Endothelial cell of umbilical vein (primary cell): ENCODE measurements at regions of chr3 and their contacts with region 1.

Region 1: GRCh38 chr3:132535575-132536441 is 61.3 kb upstream of the ACKR4 start:
- DNase-seq: peak; percentile 85
- H3K4me3 ChIP-seq: no peak overlapping the region
- H3K27ac ChIP-seq: no peak overlapping the region
- H3K4me1 ChIP-seq: peaks cover 6% of the 10 kb centered on the region
- H3K27me3 ChIP-seq: no peaks in the 10 kb centered on the region
- CTCF ChIP-seq: peak; percentile 37 to 50
- POLR2A ChIP-seq: no peak

Region 2: GRCh38 chr3:132549890-132550578 is 14.2 kb after region 1 on chr3:
- CTCF ChIA-PET with region 1: interaction called, 26 read pairs
- POLR2A ChIA-PET with region 1: no interaction called
- dilution Hi-C with region 1: no loop called
- intact Hi-C with region 1: no loop called
- DNase-seq: peak; percentile 76
- H3K4me3 ChIP-seq: no peak overlapping the region
- H3K27ac ChIP-seq: peak overlapping the region; percentile 7
- H3K4me1 ChIP-seq: peaks cover 37% of the 10 kb centered on the region
- H3K27me3 ChIP-seq: no peaks in the 10 kb centered on the region
- CTCF ChIP-seq: no peak
- POLR2A ChIP-seq: no peak

Region 3: GRCh38 chr3:132635052-132635451 is 99.2 kb after region 1 on chr3:
- CTCF ChIA-PET with region 1: interaction called, 423 read pairs
- POLR2A ChIA-PET with region 1: no interaction called
- dilution Hi-C with region 1: loop called (anchors 25 kb)
- intact Hi-C with region 1: no loop called
- DNase-seq: no peak
- H3K4me3 ChIP-seq: no peak overlapping the region
- H3K27ac ChIP-seq: no peak overlapping the region
- H3K4me1 ChIP-seq: peaks cover 22% of the 10 kb centered on the region
- H3K27me3 ChIP-seq: no peaks in the 10 kb centered on the region
- CTCF ChIP-seq: no peak
- POLR2A ChIP-seq: no peak

Region 4: GRCh38 chr3:132669256-132669777 is 133.5 kb after region 1 on chr3:
- CTCF ChIA-PET with region 1: interaction called, 10 read pairs
- POLR2A ChIA-PET with region 1: no interaction called
- dilution Hi-C with region 1: no loop called
- intact Hi-C with region 1: no loop called
- DNase-seq: peak; percentile 45
- H3K4me3 ChIP-seq: no peak overlapping the region
- H3K27ac ChIP-seq: no peak overlapping the region
- H3K4me1 ChIP-seq: peaks cover 26% of the 10 kb centered on the region
- H3K27me3 ChIP-seq: no peaks in the 10 kb centered on the region
- CTCF ChIP-seq: no peak
- POLR2A ChIP-seq: no peak

Region 5: DNA sequence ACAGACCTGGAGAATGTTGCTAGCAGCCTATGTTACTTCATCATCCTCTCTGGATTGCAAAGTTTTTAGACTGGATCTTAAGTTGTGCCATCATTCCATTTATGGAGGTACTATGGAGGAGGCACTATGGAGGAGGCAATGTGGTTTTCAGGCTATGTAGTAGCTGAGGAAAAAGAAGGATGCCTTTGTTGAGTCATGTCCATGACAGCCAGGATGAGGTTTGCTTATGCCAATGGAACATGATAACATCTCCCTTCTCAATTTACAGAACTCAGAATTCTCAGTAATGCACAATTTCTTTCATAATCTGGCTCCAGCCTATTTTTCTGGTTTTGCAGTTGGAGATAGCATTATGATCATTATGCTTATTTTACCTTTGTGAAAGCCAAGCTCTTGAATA is 436.5 kb after region 1 on chr3:
- CTCF ChIA-PET with region 1: no interaction called
- POLR2A ChIA-PET with region 1: no interaction called
- dilution Hi-C with region 1: no loop called
- intact Hi-C with region 1: no loop called
- DNase-seq: no peak
- H3K4me3 ChIP-seq: no peak overlapping the region
- H3K27ac ChIP-seq: no peak overlapping the region
- H3K4me1 ChIP-seq: no peaks in the 10 kb centered on the region
- H3K27me3 ChIP-seq: no peaks in the 10 kb centered on the region
- CTCF ChIP-seq: no peak
- POLR2A ChIP-seq: no peak

Region 6: GRCh38 chr3:133384331-133385027 is 848.7 kb after region 1 on chr3:
- CTCF ChIA-PET with region 1: no interaction called
- POLR2A ChIA-PET with region 1: no interaction called
- dilution Hi-C with region 1: no loop called
- intact Hi-C with region 1: loop called (anchors 1 kb)
- DNase-seq: peak; percentile 71
- H3K4me3 ChIP-seq: no peak overlapping the region
- H3K27ac ChIP-seq: no peak overlapping the region
- H3K4me1 ChIP-seq: peaks cover 8% of the 10 kb centered on the region
- H3K27me3 ChIP-seq: peaks cover 0 to 2% of the 10 kb centered on the region in 2 experiments
- CTCF ChIP-seq: peak; percentile 93 to 96
- POLR2A ChIP-seq: no peak